Activated naive CD4-positive, alpha-beta T cell treated with anti-CD3 and anti-CD28 coated beads for 36 hours (primary cell): ENCODE measurements at regions of chr13 and their contacts with region 1.

Region 1: GRCh38 chr13:37495046-37495445 is 103.5 kb downstream of the POSTN start:
- DNase-seq: no peak
- H3K4me3 Mint-ChIP-seq: no peak overlapping the region
- H3K27ac Mint-ChIP-seq: no peak overlapping the region
- H3K4me1 Mint-ChIP-seq: no peaks in the 10 kb centered on the region
- H3K27me3 Mint-ChIP-seq: no peaks in the 10 kb centered on the region

Region 2: DNA sequence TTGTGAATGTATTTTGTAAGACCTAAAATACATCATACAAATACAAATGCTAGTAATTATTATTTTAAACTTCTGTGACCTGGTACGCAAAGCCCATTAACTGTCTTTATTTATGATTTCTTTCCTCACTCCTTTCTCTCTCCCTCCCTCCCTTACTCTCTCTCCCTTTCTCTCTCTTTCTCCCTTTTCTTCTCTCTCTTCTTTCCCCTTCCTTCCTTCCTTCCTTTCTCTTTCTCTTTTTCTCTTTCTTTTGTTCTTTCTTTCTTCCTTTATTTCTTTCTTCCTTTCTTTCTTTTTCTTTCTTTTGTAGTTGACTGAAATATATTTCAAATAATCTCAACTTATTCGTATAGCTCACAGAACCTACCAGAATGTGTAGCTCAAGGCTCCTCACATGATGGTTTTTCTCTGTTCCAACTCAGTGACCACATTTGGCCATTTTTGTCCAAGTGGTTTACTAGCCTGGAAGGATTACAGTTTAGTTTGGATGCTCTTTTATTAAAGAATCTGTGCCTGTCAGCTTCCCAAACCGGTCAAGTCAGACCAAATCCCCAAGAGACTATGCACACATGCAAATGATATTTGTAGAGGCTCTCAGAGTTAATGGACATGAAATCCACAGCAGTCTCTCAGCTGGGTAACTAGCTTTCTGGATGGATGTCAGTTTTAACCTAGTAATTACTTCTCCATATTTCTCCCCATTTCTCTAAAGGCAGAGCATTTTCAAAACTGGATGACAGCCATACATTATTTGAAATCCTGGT is 31.8 kb after region 1 on chr13:
- CTCF ChIA-PET with region 1: no interaction called
- intact Hi-C with region 1: loop called (anchors 1 kb)
- DNase-seq: no peak
- H3K4me3 Mint-ChIP-seq: no peak overlapping the region
- H3K27ac Mint-ChIP-seq: no peak overlapping the region
- H3K4me1 Mint-ChIP-seq: no peaks in the 10 kb centered on the region
- H3K27me3 Mint-ChIP-seq: no peaks in the 10 kb centered on the region